BJ (cell line): ENCODE measurements at regions of chr1 and their contacts with region 1.

Region 1: GRCh38 chr1:63674238-63674864 is 81.1 kb downstream of the PGM1 start:
- DNase-seq: no peak
- H3K4me3 ChIP-seq: no peak overlapping the region
- H3K27me3 ChIP-seq: no peaks in the 10 kb centered on the region
- CTCF ChIP-seq: peak; percentile 87

Region 2: GRCh38 chr1:63442141-63442475 is 232.2 kb before region 1 on chr1:
- CTCF ChIA-PET with region 1: no interaction called
- POLR2A ChIA-PET with region 1: no interaction called
- DNase-seq: no peak
- H3K4me3 ChIP-seq: no peak overlapping the region
- H3K27me3 ChIP-seq: no peaks in the 10 kb centered on the region
- CTCF ChIP-seq: no peak

Region 3: GRCh38 chr1:63772206-63772605 is 97.9 kb after region 1 on chr1:
- CTCF ChIA-PET with region 1: no interaction called
- POLR2A ChIA-PET with region 1: no interaction called
- DNase-seq: no peak
- H3K4me3 ChIP-seq: no peak overlapping the region
- H3K27me3 ChIP-seq: peaks cover 11% of the 10 kb centered on the region
- CTCF ChIP-seq: no peak

Region 4: GRCh38 chr1:63821091-63822005 is 147.0 kb after region 1 on chr1:
- CTCF ChIA-PET with region 1: no interaction called
- POLR2A ChIA-PET with region 1: no interaction called
- DNase-seq: no peak
- H3K4me3 ChIP-seq: no peak overlapping the region
- H3K27me3 ChIP-seq: no peaks in the 10 kb centered on the region; the same call in 1 of the 2 replicates
- CTCF ChIP-seq: no peak

Region 5: DNA sequence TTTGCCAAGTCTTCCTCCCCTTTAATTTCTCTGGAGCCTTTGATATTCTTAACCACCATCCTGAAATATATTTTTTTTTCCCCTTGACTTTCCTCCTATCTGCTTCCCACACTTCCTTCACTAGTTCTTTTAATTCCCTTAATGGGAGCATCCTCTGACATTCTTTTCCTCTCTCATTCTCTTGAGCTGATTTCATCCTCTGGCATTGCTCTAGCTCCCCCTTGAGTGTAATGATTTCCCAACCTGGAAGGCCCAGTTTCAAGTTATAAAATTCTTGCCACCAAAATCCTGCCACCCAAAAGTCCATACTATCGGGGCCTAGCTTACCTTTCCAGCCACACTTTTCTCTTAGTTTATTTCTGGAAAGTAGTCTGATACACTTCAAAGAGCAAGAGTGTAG is 489.6 kb after region 1 on chr1:
- CTCF ChIA-PET with region 1: interaction called, 10 read pairs
- POLR2A ChIA-PET with region 1: no interaction called
- DNase-seq: no peak
- H3K4me3 ChIP-seq: no peak overlapping the region
- H3K27me3 ChIP-seq: no peaks in the 10 kb centered on the region
- CTCF ChIP-seq: peak; percentile 75